ENCODE measurements at regions of chr19 and their contacts with region 1.

Region 1: DNA sequence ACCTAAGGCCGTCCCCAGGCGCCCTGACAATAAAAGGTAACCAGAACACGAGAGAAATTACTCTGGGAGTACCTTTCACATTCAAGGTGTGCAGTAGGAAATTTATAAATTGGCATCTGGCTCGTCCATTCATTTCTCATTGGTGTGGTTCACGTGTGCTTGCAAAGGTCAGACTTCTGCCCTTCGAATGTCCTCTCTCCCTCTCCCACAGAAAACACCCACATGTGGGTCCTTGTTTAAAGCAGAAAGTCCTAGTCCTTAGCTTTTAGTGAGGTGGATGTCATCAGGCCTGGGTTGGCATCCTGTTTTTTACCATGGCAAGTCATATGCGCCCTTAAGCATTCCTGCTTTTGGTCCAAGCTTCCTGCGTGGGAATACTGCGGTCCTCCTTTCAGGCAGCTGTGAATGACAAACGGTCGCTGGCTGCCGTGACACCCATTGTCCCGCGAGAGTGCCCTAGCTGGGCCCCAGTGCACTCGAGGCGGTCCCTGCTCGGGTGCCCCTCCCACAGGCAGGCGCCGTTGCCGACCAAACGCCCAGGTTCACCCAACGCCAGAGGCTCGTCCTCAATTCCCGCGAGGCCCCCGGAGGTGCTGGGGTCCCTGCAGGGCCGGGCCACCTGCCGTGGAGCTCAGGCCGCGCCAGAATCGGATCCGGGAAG is at the start of gene NUDT19:
- DNase-seq: peak; percentile 90
- H3K4me3 Mint-ChIP-seq: peak within 1 kb of the TSS; percentile 93
- H3K27ac Mint-ChIP-seq: peak within 1 kb of the TSS; percentile 88
- H3K4me1 Mint-ChIP-seq: peaks cover 49% of the 10 kb centered on the region
- H3K27me3 Mint-ChIP-seq: no peaks in the 10 kb centered on the region
- total RNA-seq, gene NUDT19: 11.9 to 13.6 TPM

Region 2: DNA sequence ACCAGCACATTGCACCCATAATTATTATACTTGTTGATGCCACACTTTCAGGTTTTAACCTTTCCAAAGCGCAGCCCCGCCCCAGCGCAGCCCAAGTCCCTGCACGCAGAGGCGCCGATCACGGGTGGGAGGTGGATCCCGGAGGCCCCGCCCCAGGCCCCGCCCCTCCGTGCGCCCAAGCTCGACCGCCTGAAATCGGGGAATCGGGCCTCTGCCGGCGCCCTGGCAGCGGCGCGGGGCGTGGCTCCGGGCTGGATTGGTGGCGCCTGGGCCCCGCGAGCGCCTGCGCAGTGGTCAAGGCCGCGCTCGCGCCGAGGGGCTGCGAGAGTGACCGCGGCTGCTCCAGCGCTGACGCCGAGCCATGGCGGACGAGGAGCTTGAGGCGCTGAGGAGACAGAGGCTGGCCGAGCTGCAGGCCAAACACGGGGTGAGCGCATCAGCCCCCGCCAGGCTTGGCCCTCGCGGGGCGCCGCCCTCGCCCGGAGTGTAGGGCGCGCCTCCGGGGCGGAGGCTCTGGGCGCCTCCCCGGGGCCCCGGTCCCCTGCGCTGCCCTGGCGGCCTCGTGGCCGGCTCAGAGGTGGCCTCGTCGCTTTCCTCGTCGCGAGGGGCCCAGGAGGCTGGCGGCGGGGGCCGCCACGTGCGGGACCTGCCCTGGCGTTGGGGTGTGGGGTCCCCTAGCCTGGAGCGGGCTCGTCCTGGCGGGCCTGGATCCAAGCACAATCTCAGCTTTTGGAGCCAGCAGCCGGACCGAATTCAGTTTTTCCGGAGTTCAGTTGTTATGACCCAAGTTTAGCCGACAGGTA is 110.3 kb before region 1 on chr19 and contains the start of gene PDCD5:
- CTCF ChIA-PET with region 1: no interaction called
- intact Hi-C with region 1: loop called (anchors 5 kb)
- DNase-seq: peak; percentile 97
- H3K4me3 Mint-ChIP-seq: peak within 1 kb of the TSS; percentile 89
- H3K27ac Mint-ChIP-seq: peak within 1 kb of the TSS; percentile 81
- H3K4me1 Mint-ChIP-seq: peaks cover 39% of the 10 kb centered on the region
- H3K27me3 Mint-ChIP-seq: no peaks in the 10 kb centered on the region
- total RNA-seq, gene PDCD5: 233 to 242 TPM

Region 3: GRCh38 chr19:32708457-32708856 is 17.0 kb after region 1 on chr19:
- CTCF ChIA-PET with region 1: interaction called, 3 read pairs
- intact Hi-C with region 1: loop called (anchors 1 kb)
- DNase-seq: peak; percentile 80
- H3K4me3 Mint-ChIP-seq: no peak overlapping the region
- H3K27ac Mint-ChIP-seq: peak overlapping the region; percentile 64
- H3K4me1 Mint-ChIP-seq: peaks cover 16% of the 10 kb centered on the region
- H3K27me3 Mint-ChIP-seq: no peaks in the 10 kb centered on the region

Region 4: GRCh38 chr19:32757189-32757588 is 65.8 kb after region 1 on chr19:
- CTCF ChIA-PET with region 1: no interaction called
- intact Hi-C with region 1: no loop called
- DNase-seq: no peak
- H3K4me3 Mint-ChIP-seq: no peak overlapping the region
- H3K27ac Mint-ChIP-seq: no peak overlapping the region
- H3K4me1 Mint-ChIP-seq: no peaks in the 10 kb centered on the region
- H3K27me3 Mint-ChIP-seq: peaks cover 14% of the 10 kb centered on the region

Region 5: DNA sequence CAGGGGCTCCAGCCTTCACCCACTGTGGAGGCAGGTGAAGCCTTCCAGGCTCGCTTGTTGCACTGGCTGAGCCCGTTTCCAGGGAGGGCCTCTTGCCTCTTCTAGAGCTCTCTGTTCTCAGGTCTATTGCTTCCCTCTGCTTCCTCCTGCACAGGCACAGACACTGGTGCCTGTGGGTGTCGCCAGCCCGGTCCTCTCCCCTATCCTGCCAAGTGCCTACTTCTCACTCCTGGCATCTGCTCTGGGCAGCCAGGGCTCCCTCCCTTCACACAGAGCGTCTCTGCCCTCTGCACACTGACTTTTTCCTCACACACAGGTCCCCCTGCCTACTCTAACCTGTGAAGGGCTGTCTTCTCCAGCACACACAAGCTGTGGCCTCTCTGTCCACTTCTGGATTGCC is 117.8 kb after region 1 on chr19:
- CTCF ChIA-PET with region 1: no interaction called
- intact Hi-C with region 1: loop called (anchors 5 kb)
- DNase-seq: no peak
- H3K4me3 Mint-ChIP-seq: no peak overlapping the region
- H3K27ac Mint-ChIP-seq: no peak overlapping the region
- H3K4me1 Mint-ChIP-seq: peaks cover 24% of the 10 kb centered on the region
- H3K27me3 Mint-ChIP-seq: no peaks in the 10 kb centered on the region

Region 6: DNA sequence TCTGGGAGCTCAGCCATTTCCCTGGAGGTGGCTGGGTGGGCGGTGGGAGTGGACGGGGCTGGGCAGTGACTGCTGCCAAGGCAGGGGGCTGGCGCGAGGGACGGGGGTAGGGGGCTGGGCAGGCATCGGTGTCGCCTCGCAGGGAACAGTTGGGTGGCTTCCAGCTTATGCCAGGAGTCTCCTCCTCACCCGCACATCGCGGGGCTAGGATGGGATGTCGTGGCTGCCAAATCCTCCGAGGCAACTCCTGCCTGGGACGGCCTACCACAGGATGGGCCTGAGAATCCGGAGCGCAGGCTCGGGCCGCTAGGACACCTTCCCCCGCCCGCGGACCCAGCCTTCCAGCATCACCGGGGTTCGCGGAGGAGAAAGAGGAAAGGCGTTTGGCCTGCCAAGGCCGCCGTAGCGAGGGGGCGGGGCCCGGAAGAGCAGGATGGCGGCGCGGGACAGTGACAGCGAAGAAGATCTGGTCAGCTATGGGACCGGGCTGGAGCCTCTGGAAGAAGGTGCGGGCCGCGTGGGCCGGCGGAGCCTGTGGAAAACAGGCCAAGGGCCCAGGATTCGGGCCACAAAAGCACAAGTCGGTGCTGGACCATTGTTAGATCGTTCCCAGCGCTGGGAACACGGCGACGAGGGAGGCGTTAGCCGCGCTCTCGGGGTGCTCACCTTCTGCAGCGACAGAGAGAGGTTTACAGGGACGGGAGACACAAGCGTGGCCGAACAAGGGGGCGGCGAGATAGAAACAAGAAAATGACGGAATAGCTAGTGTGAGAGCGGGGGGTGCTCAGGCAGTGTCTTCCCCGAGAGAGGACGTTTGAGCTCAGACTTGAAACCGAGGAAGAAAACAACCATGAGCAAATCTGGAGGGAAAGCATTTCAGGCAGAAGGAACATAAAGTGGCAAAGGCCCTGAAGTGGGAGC is 389.6 kb after region 1 on chr19 and contains the start of gene GPATCH1:
- CTCF ChIA-PET with region 1: no interaction called
- intact Hi-C with region 1: loop called (anchors 2 kb)
- DNase-seq: peak; percentile 89
- H3K4me3 Mint-ChIP-seq: peak within 1 kb of the TSS; percentile 99
- H3K27ac Mint-ChIP-seq: peak within 1 kb of the TSS; percentile 88
- H3K4me1 Mint-ChIP-seq: peaks cover 25% of the 10 kb centered on the region
- H3K27me3 Mint-ChIP-seq: no peaks in the 10 kb centered on the region
- total RNA-seq, gene GPATCH1: 8.3 to 9.1 TPM

Region 7: GRCh38 chr19:33373701-33374421 is 682.4 kb after region 1 on chr19 and contains the start of gene CEBPG:
- CTCF ChIA-PET with region 1: no interaction called
- intact Hi-C with region 1: loop called (anchors 5 kb)
- DNase-seq: peak; percentile 67
- H3K4me3 Mint-ChIP-seq: peak within 1 kb of the TSS; percentile 88
- H3K27ac Mint-ChIP-seq: peak within 1 kb of the TSS; percentile 83
- H3K4me1 Mint-ChIP-seq: peaks cover 51% of the 10 kb centered on the region
- H3K27me3 Mint-ChIP-seq: no peaks in the 10 kb centered on the region
- total RNA-seq, gene CEBPG: 37.3 to 38.7 TPM